A673 (cell line): ENCODE measurements at regions of chr13 and their contacts with region 1.

Region 1: GRCh38 chr13:21176220-21176982 is at the starts of genes MRPL57 and SKA3:
- DNase-seq: peak; percentile 98
- H3K4me3 ChIP-seq: peak within 1 kb of the TSS; percentile 70
- H3K27ac ChIP-seq: peak within 1 kb of the TSS; percentile 98
- H3K4me1 ChIP-seq: peaks cover 33% of the 10 kb centered on the region
- H3K27me3 ChIP-seq: no peaks in the 10 kb centered on the region
- CTCF ChIP-seq: no peak
- total RNA-seq, gene MRPL57: 53.1 and 53.3 TPM in 2 replicates
- total RNA-seq, gene SKA3: 93.3 and 109 TPM in 2 replicates

Region 2: GRCh38 chr13:20775966-20776365 is 400.4 kb before region 1 on chr13:
- CTCF ChIA-PET with region 1: no interaction called
- POLR2A ChIA-PET with region 1: interaction called, 15 read pairs
- intact Hi-C with region 1: no loop called
- DNase-seq: no peak
- H3K4me3 ChIP-seq: no peak overlapping the region
- H3K27ac ChIP-seq: no peak overlapping the region
- H3K4me1 ChIP-seq: peaks cover 9% of the 10 kb centered on the region
- H3K27me3 ChIP-seq: no peaks in the 10 kb centered on the region
- CTCF ChIP-seq: no peak

Region 3: GRCh38 chr13:20940083-20940880 is 236.1 kb before region 1 on chr13:
- CTCF ChIA-PET with region 1: interaction called, 17 read pairs
- POLR2A ChIA-PET with region 1: no interaction called
- intact Hi-C with region 1: loop called (anchors 1 kb)
- DNase-seq: no peak
- H3K4me3 ChIP-seq: no peak overlapping the region
- H3K27ac ChIP-seq: no peak overlapping the region
- H3K4me1 ChIP-seq: peaks cover 6% of the 10 kb centered on the region
- H3K27me3 ChIP-seq: no peaks in the 10 kb centered on the region
- CTCF ChIP-seq: no peak

Region 4: DNA sequence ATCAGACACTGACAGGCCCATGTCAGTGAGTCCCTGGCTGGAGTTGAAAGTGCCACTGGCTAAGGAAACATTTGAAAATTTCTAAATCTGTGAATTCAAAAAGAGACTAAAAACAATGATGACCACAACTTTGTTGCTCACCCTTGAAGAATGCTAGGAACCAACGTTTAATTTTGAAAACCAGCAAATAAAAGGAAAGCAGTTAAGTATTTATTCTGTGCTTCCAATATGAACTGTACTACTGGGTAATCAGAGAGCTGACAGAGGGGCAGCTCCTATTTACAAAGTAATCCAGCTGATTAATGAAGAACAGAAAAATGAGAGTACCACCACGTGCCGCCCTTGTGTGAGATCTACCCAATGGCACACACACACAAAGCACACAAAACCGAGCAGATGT is 70.3 kb before region 1 on chr13:
- CTCF ChIA-PET with region 1: no interaction called
- POLR2A ChIA-PET with region 1: interaction called, 16 read pairs
- intact Hi-C with region 1: loop called (anchors 5 kb)
- DNase-seq: no peak
- H3K4me3 ChIP-seq: no peak overlapping the region
- H3K27ac ChIP-seq: peak overlapping the region; percentile 10
- H3K4me1 ChIP-seq: peaks cover 11% of the 10 kb centered on the region
- H3K27me3 ChIP-seq: no peaks in the 10 kb centered on the region
- CTCF ChIP-seq: no peak

Region 5: DNA sequence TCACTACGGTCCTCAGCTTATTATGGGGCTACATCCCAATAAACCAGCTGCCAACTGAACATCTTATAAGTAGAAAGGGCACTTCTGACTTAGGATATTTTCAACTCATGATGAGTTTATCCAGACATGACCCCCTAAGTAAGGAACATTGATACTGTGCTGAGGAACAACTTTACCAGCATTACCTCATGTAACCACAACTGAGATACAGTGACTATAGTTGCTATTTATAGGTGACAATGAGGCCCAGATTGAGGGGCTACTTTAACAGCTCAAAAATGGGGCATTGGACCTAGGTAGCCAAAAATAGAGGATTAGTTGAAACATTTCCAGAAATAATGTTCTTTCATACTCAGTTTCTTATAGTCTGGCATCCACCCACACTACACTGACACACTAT is 26.8 kb before region 1 on chr13:
- CTCF ChIA-PET with region 1: interaction called, 10 read pairs
- POLR2A ChIA-PET with region 1: interaction called, 3 read pairs
- intact Hi-C with region 1: no loop called
- DNase-seq: no peak
- H3K4me3 ChIP-seq: no peak overlapping the region
- H3K27ac ChIP-seq: peak overlapping the region; percentile 53
- H3K4me1 ChIP-seq: peaks cover 18% of the 10 kb centered on the region
- H3K27me3 ChIP-seq: no peaks in the 10 kb centered on the region
- CTCF ChIP-seq: no peak